ENCODE measurements at regions of chr1 and their contacts with region 1.

Region 1: GRCh38 chr1:55284852-55285251 is 69.7 kb upstream of the USP24 start:
- DNase-seq: no peak
- ATAC-seq: peak; percentile 62

Region 2: GRCh38 chr1:55195521-55196233 is 89.2 kb before region 1 on chr1:
- intact Hi-C with region 1: no loop called
- DNase-seq: no peak
- ATAC-seq: no peak

Region 3: GRCh38 chr1:55337801-55338447 is 53.1 kb after region 1 on chr1:
- intact Hi-C with region 1: loop called (anchors 2 kb)
- DNase-seq: no peak
- ATAC-seq: no peak

Region 4: DNA sequence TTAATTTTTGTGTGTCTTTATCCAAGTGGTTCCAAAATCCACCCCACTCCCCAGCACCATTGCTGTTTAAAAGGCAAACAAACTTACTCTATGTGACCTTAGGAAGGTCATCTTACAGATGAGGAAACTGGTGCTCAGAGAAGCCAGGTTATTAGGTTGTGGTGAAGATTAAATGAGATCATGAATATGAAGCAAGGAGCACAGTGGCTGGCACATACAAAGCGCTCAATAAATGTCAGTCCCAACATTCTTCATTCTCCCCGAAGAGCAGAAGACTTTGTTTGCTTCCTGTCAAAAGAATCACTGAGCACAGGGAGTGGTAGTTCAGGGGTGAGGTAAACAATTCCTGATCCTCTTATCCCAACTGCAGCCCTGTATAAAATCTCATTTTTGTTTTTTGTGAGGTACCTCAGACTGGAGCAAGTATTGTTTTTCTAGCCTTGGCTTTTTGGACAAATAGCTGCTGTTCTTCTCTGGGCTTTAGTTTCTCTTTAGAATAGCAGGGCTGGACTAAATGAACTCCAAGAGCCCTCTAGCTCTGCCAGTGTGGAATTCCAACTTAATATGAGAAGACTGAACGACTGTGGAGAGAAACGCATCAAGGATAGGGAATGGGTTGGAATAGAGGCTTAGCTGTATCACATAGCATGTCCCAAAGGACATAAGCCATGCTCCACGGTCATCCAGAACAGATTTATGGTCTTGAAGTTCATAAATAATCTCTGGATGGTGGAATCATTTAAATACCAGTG is 385.7 kb after region 1 on chr1:
- intact Hi-C with region 1: no loop called
- DNase-seq: no peak
- ATAC-seq: peak; percentile 4

Region 5: DNA sequence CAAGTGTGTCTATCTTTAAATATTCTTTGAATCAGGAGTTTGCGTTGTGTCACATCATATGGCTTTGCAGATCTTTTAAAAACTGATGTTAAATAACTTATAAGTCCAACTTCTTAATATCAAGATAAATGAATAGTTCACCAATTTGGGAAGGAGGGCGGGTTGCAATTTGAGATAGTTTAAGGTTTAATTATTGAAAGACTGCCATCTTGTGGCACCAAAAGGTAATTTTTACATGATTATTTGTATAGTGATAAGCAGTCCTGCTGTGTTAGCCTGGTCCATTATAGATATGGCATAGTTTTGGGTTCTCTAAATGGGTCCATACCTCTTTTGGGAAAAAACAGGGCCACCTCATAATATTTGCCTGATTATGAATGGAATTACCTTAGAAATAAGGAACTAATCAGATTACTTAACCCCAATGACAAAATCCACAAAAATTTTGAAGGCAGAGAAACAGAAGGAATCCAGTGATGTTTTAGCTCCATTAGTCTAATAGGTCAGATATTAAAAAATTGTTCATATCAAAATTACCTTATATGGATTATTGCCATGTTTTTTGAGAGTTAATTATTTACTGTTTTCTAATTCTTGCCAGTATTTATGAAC is 1424.5 kb after region 1 on chr1:
- intact Hi-C with region 1: loop called (anchors 5 kb)
- DNase-seq: no peak
- ATAC-seq: no peak